Dorsolateral prefrontal cortex (tissue), 120 donors: ENCODE measurements at regions of chr6 and their contacts with region 1.

Region 1: GRCh38 chr6:13454286-13455221 is 32.8 kb downstream of the GFOD1 start:
- DNase-seq: peak in 9 of 10 donors; percentile 58 to 91 (median 84)
- H3K4me3 ChIP-seq: peak overlapping the region in 41 of 59 donors; percentile 5 to 49 (median 22)
- H3K27ac ChIP-seq: peak overlapping the region in 55 of 59 donors; percentile 45 to 96 (median 75)
- H3K27me3 ChIP-seq: no peaks in the 10 kb centered on the region
- CTCF ChIP-seq: peak in 54 of 56 donors; percentile 15 to 76 (median 54)

Region 2: DNA sequence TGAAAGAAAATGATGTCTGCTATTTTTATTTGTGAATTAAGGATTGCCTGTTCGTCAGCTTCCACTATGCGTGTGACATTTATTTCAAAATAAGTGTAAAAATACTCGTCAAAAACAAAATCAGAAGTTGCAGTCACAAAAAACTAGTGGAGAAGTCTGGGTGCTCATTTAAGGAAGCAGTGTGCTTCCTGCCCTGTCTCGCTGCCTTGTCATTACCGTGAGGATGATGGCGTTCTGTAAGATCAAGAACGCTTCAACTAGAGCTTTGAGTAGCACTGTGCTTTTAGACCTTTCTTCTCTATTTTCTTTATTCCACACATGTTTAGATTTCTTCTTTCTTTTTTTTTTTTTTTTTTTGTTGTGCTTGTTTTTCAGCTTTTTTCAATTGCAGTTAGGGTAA is 313.2 kb before region 1 on chr6:
- intact Hi-C with region 1: no loop called
- DNase-seq: no peak
- H3K4me3 ChIP-seq: peak overlapping the region in 2 of 59 donors; percentile 4 to 6
- H3K27ac ChIP-seq: peak overlapping the region in 17 of 59 donors; percentile 0 to 64 (median 36)
- H3K27me3 ChIP-seq: no peaks in the 10 kb centered on the region
- CTCF ChIP-seq: no peak

Region 3: GRCh38 chr6:13413900-13414555 is 40.5 kb before region 1 on chr6:
- intact Hi-C with region 1: loop called in 1 of 2 experiments (anchors 5 kb)
- DNase-seq: peak; percentile 47 to 90 (median 80)
- H3K4me3 ChIP-seq: peak overlapping the region in 3 of 59 donors; percentile 7 to 9 (median 8)
- H3K27ac ChIP-seq: peak overlapping the region; percentile 26 to 95 (median 78)
- H3K27me3 ChIP-seq: no peaks in the 10 kb centered on the region
- CTCF ChIP-seq: peak in 43 of 56 donors; percentile 2 to 62 (median 35)

Region 4: GRCh38 chr6:13500264-13500663 is 45.7 kb after region 1 on chr6:
- intact Hi-C with region 1: no loop called
- DNase-seq: no peak
- H3K4me3 ChIP-seq: no peak overlapping the region
- H3K27ac ChIP-seq: no peak overlapping the region
- H3K27me3 ChIP-seq: no peaks in the 10 kb centered on the region
- CTCF ChIP-seq: no peak

Region 5: GRCh38 chr6:13538084-13538483 is 83.5 kb after region 1 on chr6:
- intact Hi-C with region 1: loop called (anchors 2 to 5 kb)
- DNase-seq: no peak
- H3K4me3 ChIP-seq: no peak overlapping the region
- H3K27ac ChIP-seq: peak overlapping the region in 1 of 59 donors; percentile 8
- H3K27me3 ChIP-seq: no peaks in the 10 kb centered on the region
- CTCF ChIP-seq: peak in 54 of 56 donors; percentile 36 to 78 (median 60)

Region 6: GRCh38 chr6:13574149-13574570 is 119.6 kb after region 1 on chr6:
- intact Hi-C with region 1: loop called in 1 of 2 experiments (anchors 10 kb)
- DNase-seq: peak; percentile 70 to 92 (median 84)
- H3K4me3 ChIP-seq: peak overlapping the region; percentile 46 to 96 (median 87)
- H3K27ac ChIP-seq: peak overlapping the region; percentile 75 to 99 (median 97)
- H3K27me3 ChIP-seq: no peaks in the 10 kb centered on the region
- CTCF ChIP-seq: peak; percentile 26 to 78 (median 60)